Activated CD4-positive, alpha-beta memory T cell treated with anti-CD3 and anti-CD28 coated beads for 36 hours (primary cell): ENCODE measurements at regions of chr7 and their contacts with region 1.

Region 1: GRCh38 chr7:79386688-79387422 is 66.6 kb downstream of the MAGI2 start:
- DNase-seq: no peak
- H3K4me3 Mint-ChIP-seq: no peak overlapping the region
- H3K27ac Mint-ChIP-seq: no peak overlapping the region
- H3K4me1 Mint-ChIP-seq: no peaks in the 10 kb centered on the region
- H3K27me3 Mint-ChIP-seq: no peaks in the 10 kb centered on the region

Region 2: DNA sequence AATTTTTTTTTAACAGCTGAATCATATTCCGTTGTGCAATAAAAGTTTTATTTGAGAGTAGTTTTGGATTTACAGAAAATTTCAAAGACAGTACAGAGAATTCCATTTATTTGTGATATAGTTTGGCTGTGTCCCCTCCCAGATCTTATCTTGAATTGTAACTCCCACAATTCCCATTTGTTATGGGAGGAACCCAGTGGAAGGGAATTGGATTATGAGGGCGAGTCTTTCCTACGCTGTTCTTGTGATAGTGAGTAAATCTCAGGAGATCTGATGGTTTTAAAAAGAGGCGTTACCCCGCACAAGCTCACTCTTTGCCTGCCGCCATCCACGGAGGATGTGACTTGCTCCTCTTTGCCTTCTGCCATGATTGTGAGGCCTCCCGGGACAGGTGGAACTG is 294.6 kb after region 1 on chr7:
- CTCF ChIA-PET with region 1: no interaction called
- POLR2A ChIA-PET with region 1: no interaction called
- intact Hi-C with region 1: loop called (anchors 5 kb)
- DNase-seq: no peak
- H3K4me3 Mint-ChIP-seq: no peak overlapping the region
- H3K27ac Mint-ChIP-seq: no peak overlapping the region
- H3K4me1 Mint-ChIP-seq: no peaks in the 10 kb centered on the region
- H3K27me3 Mint-ChIP-seq: no peaks in the 10 kb centered on the region